Activated CD4-positive, alpha-beta T cell treated with anti-CD3 and anti-CD28 coated beads, Interleukin-2, amount 10 ng/mL, durations not matched to agents 7 days and 5 days (primary cell): ENCODE measurements at regions of chr15 and their contacts with region 1.

Region 1: GRCh38 chr15:38699633-38700230 is 135.1 kb upstream of the RASGRP1 start:
- DNase-seq: peak; percentile 85
- H3K4me3 Mint-ChIP-seq: peak overlapping the region; percentile 53
- H3K27ac Mint-ChIP-seq: peak overlapping the region; percentile 76
- H3K4me1 Mint-ChIP-seq: peaks cover 66% of the 10 kb centered on the region
- H3K27me3 Mint-ChIP-seq: no peaks in the 10 kb centered on the region

Region 2: DNA sequence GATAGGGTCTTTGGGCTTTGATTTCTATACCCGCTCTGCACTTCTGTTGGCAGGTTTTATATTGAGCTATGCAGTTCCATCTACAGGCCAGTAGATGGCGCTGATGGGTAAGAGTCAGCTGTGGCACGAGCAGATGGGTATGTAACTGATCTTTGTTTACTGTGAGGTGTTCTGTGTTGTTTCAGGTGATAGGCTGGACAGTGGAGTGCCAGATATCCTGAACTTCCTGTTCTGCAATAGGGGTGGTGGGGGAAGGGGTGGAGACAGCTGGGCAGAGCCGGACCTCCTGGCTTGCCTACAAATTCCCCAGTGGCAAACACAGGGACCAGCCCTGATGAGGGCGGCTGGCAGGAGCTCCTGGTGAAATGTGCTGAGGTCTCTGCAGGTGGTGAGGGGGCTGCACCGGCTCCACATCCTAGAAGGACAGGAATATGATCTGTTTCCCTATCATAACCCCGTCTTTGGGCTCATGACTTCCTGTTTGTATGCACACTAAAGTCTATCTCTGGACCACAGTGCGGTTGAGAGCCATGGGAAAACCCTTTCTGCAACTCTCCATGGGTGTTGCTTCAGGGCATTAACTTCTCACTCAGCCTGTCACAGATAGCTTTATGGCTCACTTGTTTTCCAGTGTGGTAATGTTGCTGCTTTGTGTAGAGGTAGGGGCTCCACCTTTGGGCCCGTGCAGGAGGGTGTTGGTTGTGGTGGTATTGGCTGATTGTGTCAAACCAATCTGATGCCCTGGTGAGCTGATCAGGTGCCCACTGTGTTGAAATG is 259.2 kb before region 1 on chr15:
- CTCF ChIA-PET with region 1: interaction called, 56 read pairs
- POLR2A ChIA-PET with region 1: no interaction called
- DNase-seq: peak; percentile 66
- H3K4me3 Mint-ChIP-seq: no peak overlapping the region
- H3K27ac Mint-ChIP-seq: peak overlapping the region; percentile 60
- H3K4me1 Mint-ChIP-seq: peaks cover 7% of the 10 kb centered on the region
- H3K27me3 Mint-ChIP-seq: peaks cover 41% of the 10 kb centered on the region

Region 3: GRCh38 chr15:38453971-38454695 is 245.6 kb before region 1 on chr15 and contains the start of gene FAM98B:
- CTCF ChIA-PET with region 1: interaction called, 17 read pairs
- POLR2A ChIA-PET with region 1: no interaction called
- DNase-seq: peak; percentile 84
- H3K4me3 Mint-ChIP-seq: peak within 1 kb of the TSS; percentile 99
- H3K27ac Mint-ChIP-seq: peak within 1 kb of the TSS; percentile 96
- H3K4me1 Mint-ChIP-seq: peaks cover 33% of the 10 kb centered on the region
- H3K27me3 Mint-ChIP-seq: peaks cover 17% of the 10 kb centered on the region
- total RNA-seq, gene FAM98B: 34.7 to 42.9 TPM

Region 4: DNA sequence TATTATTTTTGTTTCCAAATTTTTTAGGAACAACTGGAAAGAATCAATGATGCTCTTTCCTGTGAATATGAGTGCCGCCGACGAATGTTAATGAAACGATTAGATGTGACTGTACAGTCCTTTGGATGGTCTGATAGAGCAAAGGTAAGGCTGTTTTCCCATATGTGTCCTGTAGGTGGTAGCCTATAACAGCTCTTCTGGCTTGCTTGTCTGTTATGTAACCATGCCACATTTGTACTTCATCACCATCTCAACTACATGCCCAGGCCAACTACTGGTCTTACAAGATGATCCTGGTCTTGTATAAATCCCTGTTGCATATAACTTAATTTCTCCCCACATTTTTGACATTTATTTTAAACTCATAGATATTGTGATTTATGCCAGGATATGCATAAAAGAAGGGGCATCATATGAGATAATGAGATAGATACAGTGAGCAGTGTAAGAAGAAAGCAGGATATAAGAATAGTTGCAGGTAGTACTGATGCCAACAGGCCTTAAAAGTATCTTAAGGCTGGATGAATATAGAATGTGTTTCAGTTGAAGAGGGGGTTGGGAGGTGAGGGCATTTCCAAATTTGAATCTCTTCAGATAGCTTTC is 225.5 kb before region 1 on chr15:
- CTCF ChIA-PET with region 1: interaction called, 19 read pairs
- POLR2A ChIA-PET with region 1: no interaction called
- DNase-seq: peak; percentile 57
- H3K4me3 Mint-ChIP-seq: no peak overlapping the region
- H3K27ac Mint-ChIP-seq: peak overlapping the region; percentile 74
- H3K4me1 Mint-ChIP-seq: peaks cover 13% of the 10 kb centered on the region
- H3K27me3 Mint-ChIP-seq: no peaks in the 10 kb centered on the region

Region 5: DNA sequence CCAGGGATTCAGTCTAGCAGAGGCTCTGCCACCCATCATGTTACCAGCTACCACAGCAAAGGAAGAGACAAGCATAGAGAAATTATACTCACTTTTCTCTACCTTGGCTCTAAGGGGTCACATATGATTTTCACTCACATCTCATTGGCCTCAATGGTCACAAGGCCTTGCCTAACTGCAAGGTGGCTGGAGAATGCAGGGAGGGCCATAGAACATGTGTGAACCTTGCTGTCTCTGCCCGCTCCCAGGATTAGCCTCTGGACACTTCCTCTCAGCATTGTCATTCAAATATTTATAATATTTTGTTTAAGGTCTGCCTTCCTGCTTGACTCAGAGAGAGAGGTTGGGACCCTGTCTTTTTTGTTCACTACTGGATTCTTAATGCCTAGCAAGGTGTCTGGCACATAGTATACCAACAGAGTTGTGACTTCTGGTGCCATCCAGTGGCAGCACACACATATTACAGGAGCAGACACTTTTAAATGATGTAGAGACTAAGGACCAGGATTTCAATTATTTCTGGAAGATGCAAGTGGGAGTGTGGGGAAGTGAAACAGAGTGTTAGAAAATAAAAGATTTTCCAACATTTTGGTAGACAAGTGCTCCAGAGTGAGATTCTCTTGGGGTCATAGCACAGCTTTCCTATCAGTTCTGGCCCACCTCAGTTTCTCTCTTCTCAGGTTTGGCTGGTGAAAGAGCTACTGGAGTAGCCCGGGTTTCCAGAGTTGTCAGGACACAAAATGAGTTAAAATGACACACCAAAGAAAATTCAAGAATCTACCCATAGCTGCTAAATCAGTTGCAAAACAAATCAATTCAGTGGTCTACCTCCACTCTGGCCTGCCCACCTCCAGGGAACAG is 16.1 kb before region 1 on chr15:
- CTCF ChIA-PET with region 1: interaction called, 89 read pairs
- POLR2A ChIA-PET with region 1: interaction called, 10 read pairs
- DNase-seq: peak; percentile 82
- H3K4me3 Mint-ChIP-seq: peak overlapping the region; percentile 55
- H3K27ac Mint-ChIP-seq: peak overlapping the region; percentile 95
- H3K4me1 Mint-ChIP-seq: peaks cover 81% of the 10 kb centered on the region
- H3K27me3 Mint-ChIP-seq: no peaks in the 10 kb centered on the region